HepG2 (cell line): ENCODE measurements at regions of chr3 and their contacts with region 1.

Region 1: GRCh38 chr3:57545636-57546268 is 1.6 kb upstream of the DNAH12 start:
- DNase-seq: peak; percentile 31
- ATAC-seq: peak; percentile 73
- H3K4me3 ChIP-seq: no peak overlapping the region
- H3K27ac ChIP-seq: no peak overlapping the region
- H3K4me1 ChIP-seq: peaks cover 29% of the 10 kb centered on the region
- H3K27me3 ChIP-seq: no peaks in the 10 kb centered on the region
- CTCF ChIP-seq: no peak
- EP300 ChIP-seq: no peak
- POLR2A ChIP-seq: no peak
- RAD21 ChIP-seq: no peak

Region 2: DNA sequence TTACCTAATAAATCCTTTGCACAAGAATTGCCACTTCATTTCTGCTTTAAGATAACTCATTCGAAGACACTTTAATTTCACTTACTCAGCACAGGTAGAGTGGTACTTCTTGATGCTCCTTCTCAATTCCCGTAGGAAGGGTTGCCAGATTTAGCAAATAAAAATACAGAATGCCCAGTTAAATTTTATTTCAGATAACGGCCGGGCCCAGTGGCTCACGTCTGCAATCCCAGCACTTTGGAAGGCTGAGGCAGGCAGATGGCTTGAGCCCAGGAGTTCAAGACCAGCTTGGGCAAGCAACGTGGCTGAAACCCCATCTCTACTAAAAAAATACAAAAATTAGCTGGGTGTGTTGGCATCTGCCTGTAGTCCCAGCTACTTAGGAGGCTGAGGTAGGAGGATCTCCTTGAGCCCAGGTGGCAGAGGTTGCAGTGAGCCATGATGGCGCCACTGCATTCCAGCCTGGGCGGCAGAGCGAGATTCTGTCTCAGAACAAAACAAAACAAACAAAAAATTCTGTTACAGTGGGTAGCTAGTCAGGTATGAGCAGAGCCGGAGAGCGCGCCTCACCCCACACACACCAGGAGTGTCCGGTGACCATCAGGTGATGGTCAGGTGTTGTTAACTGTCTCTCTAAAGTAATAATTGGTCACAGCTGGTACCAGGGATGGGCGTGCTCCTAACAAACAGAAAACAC is 94.5 kb before region 1 on chr3:
- CTCF ChIA-PET with region 1: no interaction called
- POLR2A ChIA-PET with region 1: no interaction called
- in situ Hi-C with region 1: no loop called
- intact Hi-C with region 1: no loop called
- DNase-seq: peak; percentile 6
- ATAC-seq: peak; percentile 20
- H3K4me3 ChIP-seq: peak overlapping the region in 1 of 3 experiments; percentile 48; a peak in 2 of 6 replicates
- H3K27ac ChIP-seq: peak overlapping the region; percentile 96
- H3K4me1 ChIP-seq: peaks cover 54% of the 10 kb centered on the region
- H3K27me3 ChIP-seq: no peaks in the 10 kb centered on the region
- CTCF ChIP-seq: no peak
- EP300 ChIP-seq: no peak
- POLR2A ChIP-seq: no peak
- RAD21 ChIP-seq: no peak; the same call in 1 of the 2 replicates

Region 3: DNA sequence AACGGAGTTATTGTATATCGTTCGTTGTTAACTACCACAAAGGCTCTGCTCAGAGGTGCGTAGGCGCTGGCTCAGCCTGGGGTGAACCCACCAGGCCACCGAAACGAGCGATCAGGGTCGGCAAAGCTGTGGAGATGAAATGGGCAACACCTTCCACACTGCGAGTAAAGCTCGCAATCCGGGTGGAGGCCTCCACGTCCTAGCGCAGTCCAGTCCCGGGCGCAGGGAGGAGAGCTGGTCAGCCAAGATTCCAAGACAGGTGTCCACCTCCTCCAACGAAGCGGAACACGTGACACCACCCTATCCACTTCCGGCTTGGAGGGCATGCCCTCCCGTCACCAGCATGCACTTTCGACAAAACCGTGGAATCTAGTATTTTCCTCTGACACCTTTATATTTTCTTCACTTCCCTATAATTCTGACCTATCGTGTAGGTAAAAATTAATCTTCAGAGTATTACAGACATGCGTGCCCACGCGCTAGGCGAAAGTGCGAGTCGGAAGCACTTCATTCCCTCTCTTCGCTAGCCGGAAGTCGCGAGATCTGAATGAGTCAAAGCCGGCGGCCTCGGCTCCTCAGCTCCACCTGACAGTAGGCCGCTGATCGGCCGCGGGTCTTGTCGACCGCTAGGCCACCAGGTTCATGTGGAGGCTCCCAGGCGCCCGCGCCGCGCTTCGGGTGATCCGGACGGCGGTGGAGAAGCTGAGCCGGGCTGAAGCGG is 10.1 kb after region 1 on chr3 and contains the start of gene PDE12:
- CTCF ChIA-PET with region 1: no interaction called
- POLR2A ChIA-PET with region 1: interaction called, 12 read pairs
- in situ Hi-C with region 1: no loop called
- intact Hi-C with region 1: no loop called
- DNase-seq: peak; percentile 88
- ATAC-seq: peak; percentile 91
- H3K4me3 ChIP-seq: peak within 1 kb of the TSS; percentile 78 to 82 (median 80)
- H3K27ac ChIP-seq: peak within 1 kb of the TSS; percentile 92
- H3K4me1 ChIP-seq: peaks cover 36% of the 10 kb centered on the region
- H3K27me3 ChIP-seq: no peaks in the 10 kb centered on the region; a peak in 1 of 5 replicates
- CTCF ChIP-seq: peak; percentile 23; the same call in 1 of the 2 replicates
- EP300 ChIP-seq: peak in 1 of 2 experiments; percentile 82; a peak in 2 of 4 replicates
- POLR2A ChIP-seq: peak; percentile 93 to 95
- RAD21 ChIP-seq: peak; percentile 34; the same call in 1 of the 2 replicates
- total RNA-seq, gene PDE12: 17.8 and 20.6 TPM in 2 replicates